ENCODE measurements at regions of chr1 and their contacts with region 1.

Region 1: GRCh38 chr1:38873027-38873969 is at the start of gene MYCBP:
- DNase-seq: peak; percentile 94
- H3K4me3 ChIP-seq: peak within 1 kb of the TSS; percentile 63 to 81 (median 70)
- H3K27ac ChIP-seq: peak within 1 kb of the TSS; percentile 57
- H3K4me1 ChIP-seq: peaks cover 11% of the 10 kb centered on the region
- H3K27me3 ChIP-seq: no peaks in the 10 kb centered on the region
- CTCF ChIP-seq: no peak
- total RNA-seq, gene MYCBP: 11.7 to 15.9 TPM

Region 2: DNA sequence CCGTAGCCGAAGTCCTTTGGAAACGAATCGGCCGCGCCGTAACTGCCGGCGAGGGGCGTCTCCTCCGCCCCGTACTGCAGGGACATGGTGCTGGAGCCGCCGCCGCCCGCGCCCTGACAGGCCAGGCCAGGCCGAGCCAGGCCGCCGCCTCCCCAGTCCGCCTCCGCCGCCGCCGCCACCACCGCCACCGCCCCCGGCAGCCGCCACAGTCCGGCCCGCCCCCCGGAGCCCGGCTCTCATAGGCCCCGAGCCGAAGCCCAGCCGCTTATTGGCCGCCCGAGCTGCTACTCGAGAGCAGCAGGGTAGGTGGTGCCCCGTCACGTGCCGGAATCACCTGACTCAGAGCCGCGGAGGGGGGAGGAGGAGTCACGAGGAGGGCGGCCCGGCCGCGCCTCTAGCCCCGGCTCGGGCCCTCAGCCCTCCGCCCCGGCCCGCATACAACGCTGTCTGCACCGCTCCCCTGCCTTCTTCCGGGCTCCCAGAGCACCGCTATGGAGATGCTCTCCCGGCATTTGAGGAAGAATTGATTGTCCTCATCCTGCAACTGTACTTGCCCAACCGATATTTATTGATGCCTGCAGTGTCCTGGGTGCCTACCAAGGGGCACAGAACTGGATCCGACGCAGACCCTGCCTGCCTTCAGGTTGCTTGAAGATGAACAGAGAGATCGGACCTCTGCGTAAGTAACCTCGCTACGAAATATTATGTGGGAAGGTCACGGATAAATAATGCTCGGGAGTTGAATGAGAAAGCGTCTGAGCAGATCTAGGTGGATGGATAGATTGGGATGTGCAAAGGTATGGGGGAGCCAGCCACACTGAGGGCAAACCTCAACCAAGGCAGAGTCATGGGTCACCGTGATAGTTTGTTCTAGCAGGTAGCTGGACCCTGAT is 13.5 kb before region 1 on chr1 and contains the start of gene RRAGC:
- CTCF ChIA-PET with region 1: no interaction called
- dilution Hi-C with region 1: no loop called
- in situ Hi-C with region 1: no loop called
- intact Hi-C with region 1: loop called (anchors 1 kb)
- DNase-seq: peak; percentile 98
- H3K4me3 ChIP-seq: peak within 1 kb of the TSS; percentile 84 to 89 (median 87)
- H3K27ac ChIP-seq: peak within 1 kb of the TSS; percentile 89
- H3K4me1 ChIP-seq: peaks cover 12% of the 10 kb centered on the region
- H3K27me3 ChIP-seq: no peaks in the 10 kb centered on the region
- CTCF ChIP-seq: no peak
- total RNA-seq, gene RRAGC: 21.8 to 36.9 TPM

Region 3: DNA sequence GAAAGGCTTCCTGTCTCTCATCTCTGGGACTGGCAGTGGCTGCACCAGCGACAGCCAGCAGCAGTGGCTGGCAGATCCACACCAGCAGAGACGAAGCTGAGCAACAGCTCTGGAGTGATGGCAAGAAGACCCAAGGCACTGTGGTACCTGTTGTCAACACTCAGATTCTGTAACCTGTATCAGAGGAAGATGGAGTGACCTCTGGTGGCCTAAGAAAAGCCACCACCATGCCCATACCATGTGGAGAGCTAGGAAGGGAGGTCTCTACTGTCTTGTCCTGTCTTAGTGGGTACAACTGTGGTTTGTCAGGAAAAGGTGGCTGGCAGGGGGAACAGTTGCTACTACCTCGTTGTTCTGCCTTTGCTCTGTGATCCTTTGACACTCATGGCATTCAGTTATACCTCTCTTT is 90.8 kb after region 1 on chr1:
- CTCF ChIA-PET with region 1: no interaction called
- dilution Hi-C with region 1: no loop called
- in situ Hi-C with region 1: no loop called
- intact Hi-C with region 1: loop called (anchors 5 kb)
- DNase-seq: no peak
- H3K4me3 ChIP-seq: no peak overlapping the region
- H3K27ac ChIP-seq: no peak overlapping the region
- H3K4me1 ChIP-seq: peaks cover 34% of the 10 kb centered on the region
- H3K27me3 ChIP-seq: no peaks in the 10 kb centered on the region
- CTCF ChIP-seq: peak; percentile 19 to 51

Region 4: GRCh38 chr1:38990738-38991639 is 117.7 kb after region 1 on chr1 and contains the start of gene AKIRIN1:
- CTCF ChIA-PET with region 1: no interaction called
- dilution Hi-C with region 1: no loop called
- in situ Hi-C with region 1: loop called in 1 of 2 experiments (anchors 10 kb)
- intact Hi-C with region 1: loop called (anchors 1 kb)
- DNase-seq: peak; percentile 94
- H3K4me3 ChIP-seq: peak within 1 kb of the TSS; percentile 69 to 83 (median 72)
- H3K27ac ChIP-seq: peak within 1 kb of the TSS; percentile 61
- H3K4me1 ChIP-seq: peaks cover 28% of the 10 kb centered on the region
- H3K27me3 ChIP-seq: no peaks in the 10 kb centered on the region
- CTCF ChIP-seq: no peak
- total RNA-seq, gene AKIRIN1: 62.8 to 63.5 TPM

Region 5: GRCh38 chr1:39026051-39026865 is 153.0 kb after region 1 on chr1 and contains the start of gene NDUFS5:
- CTCF ChIA-PET with region 1: interaction called, 4 read pairs
- dilution Hi-C with region 1: no loop called
- in situ Hi-C with region 1: no loop called
- intact Hi-C with region 1: loop called (anchors 1 kb)
- DNase-seq: peak; percentile 90
- H3K4me3 ChIP-seq: peak within 1 kb of the TSS; percentile 70 to 85 (median 78)
- H3K27ac ChIP-seq: peak within 1 kb of the TSS; percentile 98
- H3K4me1 ChIP-seq: peaks cover 9% of the 10 kb centered on the region
- H3K27me3 ChIP-seq: no peaks in the 10 kb centered on the region
- CTCF ChIP-seq: no peak
- total RNA-seq, gene NDUFS5: 204 to 259 TPM

Region 6: DNA sequence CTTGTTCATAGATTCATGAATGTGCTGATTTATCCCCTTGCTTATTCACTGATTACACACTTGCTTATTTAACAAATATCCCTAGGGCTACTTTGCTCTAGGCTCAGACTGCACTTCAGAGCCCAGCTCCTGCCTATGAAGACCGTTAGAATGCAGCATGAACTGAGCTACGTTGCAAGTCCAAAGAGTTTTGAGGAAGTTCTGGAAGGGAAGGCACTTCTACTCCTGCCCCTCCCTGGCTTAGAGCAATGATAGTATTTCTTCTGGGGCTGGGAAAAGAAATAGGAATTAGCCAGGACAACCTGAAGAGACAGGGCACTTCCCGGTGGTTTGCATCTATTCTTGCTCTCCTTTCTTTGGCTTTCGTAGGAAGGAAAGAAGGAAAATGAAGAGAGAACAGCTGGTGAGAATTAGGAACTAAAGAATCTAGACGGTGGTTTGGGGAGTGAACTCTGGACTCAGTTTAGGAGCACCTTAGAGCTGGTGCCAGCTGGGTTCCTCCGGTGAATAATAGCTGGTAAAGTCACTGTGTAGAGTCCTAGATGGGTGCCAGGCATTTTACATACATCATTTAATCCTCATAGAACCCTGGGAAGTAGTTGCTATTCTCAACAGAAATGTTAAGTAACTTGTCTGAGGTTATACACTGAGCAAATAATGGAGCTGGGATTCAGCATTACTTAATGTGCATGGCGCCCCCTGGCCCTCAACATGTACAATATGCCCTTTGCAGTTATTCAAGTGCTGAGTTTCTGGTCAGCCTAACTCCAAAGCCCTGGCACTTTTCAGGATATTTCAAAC is 218.7 kb after region 1 on chr1:
- CTCF ChIA-PET with region 1: no interaction called
- dilution Hi-C with region 1: no loop called
- in situ Hi-C with region 1: no loop called
- intact Hi-C with region 1: loop called (anchors 1 kb)
- DNase-seq: peak; percentile 54
- H3K4me3 ChIP-seq: no peak overlapping the region
- H3K27ac ChIP-seq: no peak overlapping the region
- H3K4me1 ChIP-seq: peaks cover 14% of the 10 kb centered on the region
- H3K27me3 ChIP-seq: no peaks in the 10 kb centered on the region
- CTCF ChIP-seq: peak; percentile 79 to 82